ENCODE measurements at regions of chr15 and their contacts with region 1.

Region 1: GRCh38 chr15:88258093-88258641 is 1.6 kb upstream of the NTRK3 start:
- DNase-seq: peak; percentile 79

Region 2: GRCh38 chr15:87549860-87550259 is 708.3 kb before region 1 on chr15:
- intact Hi-C with region 1: loop called in 1 of 2 experiments (anchors 5 kb)
- DNase-seq: no peak

Region 3: DNA sequence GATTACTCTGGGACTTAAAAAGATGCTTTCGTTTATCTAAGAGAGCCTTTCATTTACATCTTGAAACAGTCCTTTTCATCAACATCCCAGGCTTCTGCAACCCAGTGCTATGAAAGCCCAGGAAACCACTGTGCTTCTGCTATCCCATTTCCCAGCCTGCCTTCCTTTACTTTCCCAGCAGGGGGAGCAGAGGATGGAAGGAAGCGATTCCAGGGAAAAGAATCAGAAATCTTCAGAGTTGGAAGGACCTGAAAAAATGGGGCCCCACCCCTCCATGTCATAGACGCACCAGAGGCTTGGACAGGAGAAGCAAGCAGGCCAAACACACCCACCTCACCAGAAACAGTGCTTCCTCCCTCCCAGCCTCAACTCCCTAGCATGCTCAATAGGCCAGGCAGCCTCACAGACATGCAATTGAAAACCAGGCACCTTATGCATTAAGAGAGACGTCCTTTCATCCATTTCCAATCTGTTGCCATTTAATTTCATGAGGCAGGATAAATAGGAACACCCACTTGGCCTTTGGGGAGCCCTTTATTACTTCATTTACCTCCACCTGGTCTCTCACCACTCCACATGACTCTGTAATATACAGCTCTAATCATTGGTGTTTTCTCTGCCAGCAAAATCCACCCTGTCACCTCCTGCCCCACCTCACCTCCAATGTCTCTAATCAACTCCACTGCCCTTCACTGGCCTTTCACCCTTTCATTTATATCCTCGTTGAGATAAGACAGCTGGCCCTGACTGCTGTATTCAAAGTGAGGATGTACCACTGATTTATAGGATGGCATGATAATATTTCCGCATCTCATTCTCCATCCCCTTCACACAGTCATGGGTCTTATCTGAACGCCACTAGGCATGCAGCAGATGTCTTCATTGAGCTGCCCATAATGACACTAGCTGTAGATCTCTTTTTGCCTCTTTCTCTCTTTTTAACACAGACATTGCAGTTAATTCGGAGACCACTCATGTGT is 585.6 kb before region 1 on chr15:
- intact Hi-C with region 1: loop called in 1 of 2 experiments (anchors 10 kb)
- DNase-seq: no peak

Region 4: GRCh38 chr15:87959081-87959480 is 299.1 kb before region 1 on chr15:
- intact Hi-C with region 1: loop called (anchors 10 kb)
- DNase-seq: no peak

Region 5: DNA sequence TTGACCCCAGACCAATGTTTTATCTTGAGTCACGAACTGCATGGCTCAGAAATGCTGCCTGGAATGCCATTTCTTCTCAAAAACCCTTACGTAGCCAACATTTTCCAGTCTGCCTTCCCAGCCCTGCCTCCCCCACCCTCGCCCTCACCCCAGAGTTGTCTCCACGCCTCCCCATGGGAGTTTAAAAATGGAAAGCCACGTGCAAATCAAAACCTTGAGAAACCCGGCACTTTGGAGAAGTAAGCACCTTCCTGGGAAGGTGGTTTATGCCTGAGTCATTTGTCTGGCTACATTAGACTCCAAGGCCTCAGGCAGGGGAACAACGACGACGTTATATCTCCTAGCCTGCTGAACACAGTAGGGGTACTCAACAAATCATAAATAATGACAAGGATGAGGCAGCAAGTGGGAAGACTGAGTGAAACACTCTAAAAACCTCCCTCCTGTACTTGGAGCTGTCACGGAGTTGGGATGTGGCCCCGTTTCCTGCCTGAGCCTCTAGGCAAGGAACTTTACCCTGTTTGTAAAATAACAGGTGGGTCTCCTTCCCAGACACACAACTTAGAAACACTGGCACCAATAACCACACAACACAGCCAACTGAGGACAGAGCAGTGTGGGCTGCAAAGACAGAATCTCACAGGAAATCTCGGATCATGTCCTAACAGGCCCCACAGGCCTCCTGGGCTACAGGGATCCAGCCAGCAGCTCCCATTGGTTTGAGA is 180.7 kb before region 1 on chr15:
- intact Hi-C with region 1: loop called (anchors 10 kb)
- DNase-seq: no peak